Lower lobe of right lung (tissue), 2 donors: ENCODE measurements at regions of chr5 and their contacts with region 1.

Region 1: DNA sequence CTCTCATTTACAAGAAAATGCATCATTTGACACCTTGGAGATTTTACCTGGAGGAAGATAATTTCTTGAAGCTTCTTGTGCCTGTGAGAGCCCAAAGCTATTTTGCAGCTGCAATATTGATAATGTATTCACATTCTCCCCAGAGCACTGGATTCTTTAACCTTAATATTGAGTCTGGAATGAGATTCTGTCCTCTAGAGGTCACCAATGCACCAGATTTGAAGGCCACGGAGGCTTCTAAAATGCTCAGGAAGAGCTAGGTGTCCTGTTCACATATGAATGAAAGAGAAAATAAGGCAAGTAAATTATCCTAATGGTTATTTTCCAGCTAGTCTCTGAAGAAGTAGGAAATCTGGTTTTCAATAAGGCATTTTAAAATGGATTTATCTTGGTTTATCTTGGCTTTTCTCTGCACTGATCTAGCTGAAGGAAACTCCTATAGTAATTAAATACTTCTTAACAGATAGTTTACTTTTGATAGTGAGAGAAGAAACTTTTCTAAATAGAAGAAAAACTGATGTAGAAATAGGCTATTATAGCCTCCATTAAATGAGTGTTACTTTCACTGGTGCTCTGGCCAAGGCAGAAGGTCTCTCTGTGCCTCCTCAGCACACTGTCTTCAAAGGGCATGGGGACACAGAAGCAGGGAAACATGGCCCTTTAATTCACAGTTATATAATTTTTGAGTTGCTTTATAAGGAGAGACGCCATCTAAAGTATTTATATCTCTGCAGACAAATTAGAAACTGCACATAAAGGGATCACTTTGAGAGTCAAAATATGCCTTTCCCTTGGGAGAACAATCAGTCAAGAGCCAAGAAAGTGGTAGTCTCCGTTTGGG is 297.0 kb upstream of the ACTBL2 start:
- DNase-seq: no peak
- ATAC-seq: peak; percentile 76 to 88
- H3K4me3 ChIP-seq: no peak overlapping the region
- H3K27ac ChIP-seq: no peak overlapping the region
- H3K4me1 ChIP-seq: peaks cover 20% of the 10 kb centered on the region
- H3K27me3 ChIP-seq: no peaks in the 10 kb centered on the region
- CTCF ChIP-seq: peak; percentile 66

Region 2: GRCh38 chr5:57298295-57298984 is 481.2 kb before region 1 on chr5:
- intact Hi-C with region 1: loop called (anchors 10 kb)
- DNase-seq: peak; percentile 60
- ATAC-seq: peak; percentile 91 to 96
- H3K4me3 ChIP-seq: peak overlapping the region; percentile 27
- H3K27ac ChIP-seq: no peak overlapping the region
- H3K4me1 ChIP-seq: peaks cover 11% of the 10 kb centered on the region
- H3K27me3 ChIP-seq: no peaks in the 10 kb centered on the region
- CTCF ChIP-seq: peak; percentile 77

Region 3: DNA sequence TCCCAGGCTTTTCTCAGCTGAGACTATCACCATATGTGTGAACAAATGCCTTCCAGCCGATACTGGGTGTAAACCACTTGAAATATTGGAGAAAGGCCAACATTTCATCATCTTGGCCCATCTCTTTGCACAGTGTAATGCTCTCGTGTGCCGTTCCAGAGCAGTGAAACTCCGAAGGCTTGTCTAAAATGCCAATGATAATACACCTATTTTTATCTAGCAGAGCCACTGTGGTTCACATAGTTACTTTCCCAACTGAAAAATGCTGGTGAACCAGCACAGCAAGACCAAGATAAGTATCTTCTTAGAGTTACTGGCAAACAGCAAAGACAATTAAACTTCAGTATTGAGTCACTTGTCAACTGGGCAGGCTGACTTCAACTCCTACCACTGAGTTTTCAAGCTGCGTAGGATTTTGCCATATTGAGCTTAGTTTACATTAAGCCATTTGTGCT is 82.9 kb after region 1 on chr5:
- intact Hi-C with region 1: no loop called
- DNase-seq: no peak
- ATAC-seq: no peak
- H3K4me3 ChIP-seq: no peak overlapping the region
- H3K27ac ChIP-seq: no peak overlapping the region
- H3K4me1 ChIP-seq: no peaks in the 10 kb centered on the region
- H3K27me3 ChIP-seq: no peaks in the 10 kb centered on the region
- CTCF ChIP-seq: no peak

Region 4: GRCh38 chr5:58466939-58467338 is 687.3 kb after region 1 on chr5:
- intact Hi-C with region 1: loop called (anchors 5 kb)
- DNase-seq: no peak
- ATAC-seq: peak; percentile 58 to 62
- H3K4me3 ChIP-seq: no peak overlapping the region
- H3K27ac ChIP-seq: no peak overlapping the region
- H3K4me1 ChIP-seq: peaks cover 7% of the 10 kb centered on the region
- H3K27me3 ChIP-seq: no peaks in the 10 kb centered on the region
- CTCF ChIP-seq: no peak